A549 (cell line): ENCODE measurements at regions of chr11 and their contacts with region 1.

Region 1: DNA sequence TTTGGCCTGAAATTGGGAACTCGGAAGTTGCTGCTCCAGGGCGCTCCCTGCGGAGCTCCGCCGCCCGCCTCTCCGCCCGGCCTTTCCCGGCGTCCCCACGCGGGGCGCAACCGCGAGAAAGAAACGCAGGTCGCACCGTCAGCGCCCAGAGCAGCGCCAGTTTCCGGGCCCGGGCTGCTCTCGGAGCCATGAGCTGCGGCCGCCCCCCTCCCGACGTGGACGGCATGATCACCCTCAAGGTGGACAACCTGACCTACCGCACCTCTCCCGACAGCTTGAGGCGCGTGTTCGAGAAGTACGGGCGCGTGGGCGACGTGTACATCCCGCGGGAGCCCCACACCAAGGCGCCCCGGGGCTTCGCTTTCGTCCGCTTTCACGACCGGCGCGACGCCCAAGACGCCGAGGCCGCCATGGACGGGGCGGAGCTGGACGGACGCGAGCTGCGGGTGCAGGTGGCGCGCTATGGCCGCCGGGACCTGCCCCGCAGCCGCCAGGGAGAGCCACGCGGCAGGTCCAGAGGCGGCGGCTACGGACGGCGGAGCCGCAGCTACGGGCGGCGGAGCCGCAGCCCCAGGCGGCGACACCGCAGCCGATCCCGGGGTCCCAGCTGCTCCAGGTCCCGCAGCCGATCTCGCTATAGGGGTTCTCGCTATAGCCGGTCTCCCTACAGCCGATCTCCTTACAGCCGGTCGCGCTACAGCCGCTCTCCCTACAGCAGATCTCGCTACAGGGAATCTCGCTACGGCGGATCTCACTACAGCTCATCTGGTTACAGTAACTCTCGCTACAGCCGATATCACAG is 521 bp downstream of the SRSF8 start:
- DNase-seq: peak; percentile 28 to 78
- ATAC-seq: peak; percentile 86 to 87
- H3K4me3 ChIP-seq: peak overlapping the region; percentile 69
- H3K27ac ChIP-seq: peak overlapping the region; percentile 83 to 98
- H3K4me1 ChIP-seq: peaks cover 9% of the 10 kb centered on the region; the same call in 2 of the 3 replicates
- CTCF ChIP-seq: peak; percentile 11; the same call in 1 of the 3 replicates
- EP300 ChIP-seq: no peak
- POLR2A ChIP-seq: peak; percentile 43
- RAD21 ChIP-seq: no peak

Region 2: GRCh38 chr11:94862926-94863880 is 204.0 kb before region 1 on chr11:
- CTCF ChIA-PET with region 1: no interaction called
- POLR2A ChIA-PET with region 1: no interaction called
- DNase-seq: no peak
- ATAC-seq: no peak
- H3K4me3 ChIP-seq: no peak overlapping the region
- H3K27ac ChIP-seq: no peak overlapping the region
- H3K4me1 ChIP-seq: no peaks in the 10 kb centered on the region
- CTCF ChIP-seq: no peak
- EP300 ChIP-seq: no peak
- POLR2A ChIP-seq: no peak
- RAD21 ChIP-seq: no peak

Region 3: GRCh38 chr11:94973099-94973968 is 93.9 kb before region 1 on chr11 and contains the starts of genes CWC15 and KDM4D:
- CTCF ChIA-PET with region 1: interaction called, 3 read pairs
- POLR2A ChIA-PET with region 1: interaction called, 20 read pairs
- DNase-seq: peak; percentile 87 to 89
- ATAC-seq: peak; percentile 100
- H3K4me3 ChIP-seq: peak within 1 kb of the TSS; percentile 66
- H3K27ac ChIP-seq: peak within 1 kb of the TSS; percentile 78 to 95
- H3K4me1 ChIP-seq: peaks cover 6% of the 10 kb centered on the region; the same call in 2 of the 3 replicates
- CTCF ChIP-seq: no peak
- EP300 ChIP-seq: no peak
- POLR2A ChIP-seq: peak; percentile 49
- RAD21 ChIP-seq: no peak
- polyA plus RNA-seq, gene CWC15: 31.8 and 42.8 TPM in 2 replicates
- polyA plus RNA-seq, gene KDM4D: 0.77 and 1.1 TPM in 2 replicates

Region 4: DNA sequence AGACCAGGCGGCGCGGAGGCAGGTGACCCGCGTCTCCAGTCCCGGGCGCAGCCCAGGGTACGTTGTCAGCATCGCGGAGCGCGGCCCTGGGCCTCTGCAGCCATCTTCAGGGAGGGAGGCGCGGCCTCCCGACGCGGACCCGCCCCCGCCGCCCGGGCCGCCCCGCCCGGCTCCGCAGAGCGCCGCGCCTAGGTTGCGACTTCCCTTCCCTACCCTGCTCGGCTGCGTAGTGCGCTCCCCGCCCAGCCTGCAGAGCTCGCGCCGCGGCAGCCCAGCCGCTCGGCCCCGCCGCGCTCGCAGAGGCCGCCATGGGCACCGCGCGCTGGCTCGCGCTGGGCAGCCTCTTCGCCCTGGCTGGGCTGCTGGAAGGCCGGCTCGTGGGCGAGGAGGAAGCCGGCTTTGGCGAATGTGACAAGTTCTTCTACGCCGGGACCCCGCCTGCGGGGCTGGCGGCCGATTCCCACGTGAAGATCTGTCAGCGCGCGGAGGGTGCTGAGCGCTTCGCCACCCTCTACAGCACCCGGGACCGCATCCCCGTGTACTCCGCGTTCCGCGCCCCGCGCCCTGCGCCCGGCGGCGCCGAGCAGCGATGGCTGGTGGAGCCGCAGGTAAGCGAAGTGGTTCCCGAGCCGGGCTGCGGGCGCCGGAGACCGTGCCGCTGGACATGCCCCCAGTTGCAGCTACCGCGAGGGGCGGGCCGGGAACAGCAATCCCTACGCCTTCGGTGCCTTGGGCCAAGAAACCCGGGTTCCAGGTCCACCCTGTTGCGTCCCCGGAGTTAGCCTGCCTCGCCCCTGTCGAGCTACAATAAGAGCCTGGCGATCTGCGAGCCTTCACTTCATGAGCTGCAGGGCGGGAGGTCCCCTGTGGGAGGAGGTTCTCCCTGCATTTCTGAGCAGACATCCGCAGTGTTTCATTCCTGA is 22.6 kb after region 1 on chr11 and contains the start of gene ENDOD1:
- CTCF ChIA-PET with region 1: interaction called, 17 read pairs
- POLR2A ChIA-PET with region 1: interaction called, 29 read pairs
- DNase-seq: peak; percentile 45 to 75
- ATAC-seq: peak; percentile 92 to 95
- H3K4me3 ChIP-seq: peak within 1 kb of the TSS; percentile 80
- H3K27ac ChIP-seq: peak within 1 kb of the TSS; percentile 84 to 96
- H3K4me1 ChIP-seq: peaks cover 24% of the 10 kb centered on the region
- CTCF ChIP-seq: no peak
- EP300 ChIP-seq: no peak
- POLR2A ChIP-seq: peak; percentile 74
- RAD21 ChIP-seq: no peak
- polyA plus RNA-seq, gene ENDOD1: 8.1 and 8.3 TPM in 2 replicates

Region 5: GRCh38 chr11:95764267-95764898 is 697.1 kb after region 1 on chr11:
- CTCF ChIA-PET with region 1: interaction called, 11 read pairs
- POLR2A ChIA-PET with region 1: no interaction called
- DNase-seq: peak; percentile 13 to 45
- ATAC-seq: peak; percentile 59 to 76; a peak in 4 of 6 replicates
- H3K4me3 ChIP-seq: no peak overlapping the region
- H3K27ac ChIP-seq: no peak overlapping the region
- H3K4me1 ChIP-seq: peaks cover 6% of the 10 kb centered on the region; the same call in 1 of the 3 replicates
- CTCF ChIP-seq: peak; percentile 64
- EP300 ChIP-seq: no peak
- POLR2A ChIP-seq: no peak
- RAD21 ChIP-seq: peak; percentile 68 to 77